ENCODE measurements at regions of chr5 and their contacts with region 1.

Region 1: GRCh38 chr5:42157215-42157614 is 232.1 kb downstream of the FBXO4 start:
- DNase-seq: no peak
- ATAC-seq: no peak

Region 2: GRCh38 chr5:42108470-42108869 is 48.7 kb before region 1 on chr5:
- intact Hi-C with region 1: loop called (anchors 2 kb)
- DNase-seq: no peak
- ATAC-seq: no peak

Measured in Right ventricle myocardium inferior (tissue), 1 donor.